ENCODE measurements at regions of chr5 and their contacts with region 1.

Region 1: GRCh38 chr5:122192497-122193496 is 63.5 kb downstream of the ZNF474 start:
- DNase-seq: no peak
- H3K4me3 ChIP-seq: no peak overlapping the region
- H3K27ac ChIP-seq: no peak overlapping the region
- H3K4me1 ChIP-seq: peaks cover 0 to 3% (median 0%) of the 10 kb centered on the region in 4 experiments; a peak in 1 of 7 replicates
- H3K27me3 ChIP-seq: no peaks in the 10 kb centered on the region
- CTCF ChIP-seq: peak in 2 of 3 experiments; percentile 61 to 67; a peak in 3 of 4 replicates
- EP300 ChIP-seq: no peak
- POLR2A ChIP-seq: no peak
- RAD21 ChIP-seq: peak; percentile 70 to 81

Region 2: GRCh38 chr5:122182491-122182921 is 10.3 kb before region 1 on chr5:
- CTCF ChIA-PET with region 1: interaction called, 10 read pairs
- POLR2A ChIA-PET with region 1: no interaction called
- DNase-seq: no peak
- H3K4me3 ChIP-seq: no peak overlapping the region
- H3K27ac ChIP-seq: no peak overlapping the region
- H3K4me1 ChIP-seq: peaks cover 0 to 10% (median 7%) of the 10 kb centered on the region in 4 experiments; a peak in 4 of 7 replicates
- H3K27me3 ChIP-seq: no peaks in the 10 kb centered on the region
- CTCF ChIP-seq: no peak
- EP300 ChIP-seq: no peak
- POLR2A ChIP-seq: no peak
- RAD21 ChIP-seq: no peak

Region 3: DNA sequence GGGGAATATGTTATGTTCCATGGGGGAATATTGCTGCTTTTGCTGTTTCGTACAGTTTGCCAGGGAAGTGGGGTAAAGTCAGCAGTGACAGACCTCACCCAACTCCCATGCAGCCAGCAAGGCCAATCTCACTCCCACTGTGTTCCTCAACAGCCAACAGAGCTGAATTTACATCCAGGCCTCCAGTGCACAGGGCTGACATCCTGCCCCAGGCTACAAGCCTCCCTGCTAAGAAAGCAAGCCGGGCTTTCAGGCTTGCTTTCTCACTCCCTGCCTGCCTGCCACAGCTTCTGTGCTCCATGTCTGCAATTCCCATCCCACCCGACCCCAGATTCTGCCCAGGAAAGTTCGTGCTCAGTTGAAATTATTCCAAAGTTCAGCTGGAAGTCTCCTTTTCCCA is 93.7 kb after region 1 on chr5:
- CTCF ChIA-PET with region 1: interaction called, 18 read pairs
- POLR2A ChIA-PET with region 1: no interaction called
- DNase-seq: no peak
- H3K4me3 ChIP-seq: no peak overlapping the region
- H3K27ac ChIP-seq: no peak overlapping the region
- H3K4me1 ChIP-seq: peaks cover 0 to 3% (median under 1%) of the 10 kb centered on the region in 4 experiments; a peak in 2 of 7 replicates
- H3K27me3 ChIP-seq: no peaks in the 10 kb centered on the region
- CTCF ChIP-seq: no peak
- EP300 ChIP-seq: no peak
- POLR2A ChIP-seq: no peak
- RAD21 ChIP-seq: no peak

Region 4: DNA sequence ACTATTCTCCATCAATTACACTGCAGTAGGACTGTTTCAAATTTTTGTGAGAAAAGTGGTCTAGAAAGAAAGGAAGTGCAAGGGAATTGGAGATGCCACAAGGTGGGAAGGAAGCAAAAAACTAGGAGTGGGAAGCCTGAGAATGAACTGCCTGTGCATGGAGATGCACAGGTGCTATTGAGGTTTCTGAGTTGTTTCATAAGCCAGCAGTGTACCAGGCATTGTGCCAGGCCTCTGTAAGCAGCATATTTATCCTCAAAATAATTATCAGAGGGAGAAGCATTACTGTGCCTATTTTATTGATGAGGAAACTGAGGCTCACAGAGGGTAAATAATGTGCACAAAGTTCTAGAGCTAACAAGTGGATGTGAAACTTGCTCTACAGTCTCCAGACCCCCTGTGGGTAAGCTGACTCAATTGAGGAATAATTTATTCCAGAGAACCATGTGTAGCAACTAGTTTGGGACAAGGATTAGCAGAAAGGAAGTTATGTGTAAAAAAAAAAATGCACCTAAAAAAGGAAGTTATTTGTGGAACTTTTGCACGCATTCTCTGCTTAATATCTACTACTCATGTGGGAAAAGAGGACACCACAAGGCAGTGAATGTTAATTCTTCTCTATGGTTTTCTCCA is 215.9 kb after region 1 on chr5:
- CTCF ChIA-PET with region 1: interaction called, 14 read pairs
- POLR2A ChIA-PET with region 1: no interaction called
- DNase-seq: no peak
- H3K4me3 ChIP-seq: no peak overlapping the region
- H3K27ac ChIP-seq: no peak overlapping the region
- H3K4me1 ChIP-seq: peaks cover 0 to 2% (median under 1%) of the 10 kb centered on the region in 4 experiments; a peak in 2 of 7 replicates
- H3K27me3 ChIP-seq: no peaks in the 10 kb centered on the region
- CTCF ChIP-seq: no peak
- EP300 ChIP-seq: no peak
- POLR2A ChIP-seq: no peak
- RAD21 ChIP-seq: no peak

Region 5: DNA sequence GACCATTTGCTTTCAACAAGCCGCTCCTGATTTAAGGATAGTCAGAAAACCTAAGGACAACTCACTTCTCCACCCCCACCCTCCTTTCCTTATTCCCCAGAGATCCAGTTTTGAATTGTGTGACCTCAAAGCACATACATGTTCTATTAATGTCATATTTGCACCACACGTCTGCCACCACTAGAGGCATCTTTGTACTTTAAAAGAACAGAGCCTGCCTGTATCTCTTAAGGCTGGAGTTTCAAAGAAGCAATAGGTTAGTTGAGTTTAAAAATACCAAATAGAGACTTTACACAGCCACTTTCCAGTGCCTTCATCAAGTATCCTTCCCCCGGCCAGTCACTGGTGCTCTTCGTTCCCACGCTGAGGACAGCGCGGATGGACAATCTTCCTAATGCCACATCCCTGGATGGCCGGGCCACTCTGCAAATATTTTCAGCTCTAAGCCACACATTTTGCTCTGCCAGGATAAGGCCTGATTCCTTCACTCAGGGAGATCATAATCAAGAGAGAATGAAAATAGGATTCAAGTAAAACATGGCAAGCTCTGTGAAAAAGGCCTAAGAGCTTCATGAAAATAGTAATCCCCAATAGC is 265.6 kb after region 1 on chr5:
- CTCF ChIA-PET with region 1: interaction called, 15 read pairs
- POLR2A ChIA-PET with region 1: no interaction called
- DNase-seq: no peak
- H3K4me3 ChIP-seq: no peak overlapping the region
- H3K27ac ChIP-seq: no peak overlapping the region
- H3K4me1 ChIP-seq: no peaks in the 10 kb centered on the region; a peak in 1 of 7 replicates
- H3K27me3 ChIP-seq: no peaks in the 10 kb centered on the region
- CTCF ChIP-seq: peak in 2 of 3 experiments; percentile 35 to 60; a peak in 2 of 4 replicates
- EP300 ChIP-seq: no peak
- POLR2A ChIP-seq: no peak
- RAD21 ChIP-seq: peak; percentile 49 to 66

Region 6: GRCh38 chr5:122500245-122501075 is 307.7 kb after region 1 on chr5:
- CTCF ChIA-PET with region 1: interaction called, 221 read pairs
- POLR2A ChIA-PET with region 1: no interaction called
- DNase-seq: peak; percentile 31 to 54
- H3K4me3 ChIP-seq: no peak overlapping the region
- H3K27ac ChIP-seq: no peak overlapping the region
- H3K4me1 ChIP-seq: peaks cover 0 to 9% (median 4%) of the 10 kb centered on the region in 4 experiments; a peak in 3 of 7 replicates
- H3K27me3 ChIP-seq: no peaks in the 10 kb centered on the region
- CTCF ChIP-seq: peak; percentile 72 to 82 (median 74)
- EP300 ChIP-seq: no peak
- POLR2A ChIP-seq: no peak
- RAD21 ChIP-seq: peak; percentile 94